ENCODE measurements at regions of chr10 and their contacts with region 1.

Region 1: GRCh38 chr10:62437696-62438095 is 63.5 kb downstream of the ZNF365 start:
- DNase-seq: peak; percentile 79
- H3K4me3 Mint-ChIP-seq: no peak overlapping the region
- H3K27ac Mint-ChIP-seq: no peak overlapping the region
- H3K4me1 Mint-ChIP-seq: peaks cover 10% of the 10 kb centered on the region
- H3K27me3 Mint-ChIP-seq: peaks cover 30% of the 10 kb centered on the region

Region 2: DNA sequence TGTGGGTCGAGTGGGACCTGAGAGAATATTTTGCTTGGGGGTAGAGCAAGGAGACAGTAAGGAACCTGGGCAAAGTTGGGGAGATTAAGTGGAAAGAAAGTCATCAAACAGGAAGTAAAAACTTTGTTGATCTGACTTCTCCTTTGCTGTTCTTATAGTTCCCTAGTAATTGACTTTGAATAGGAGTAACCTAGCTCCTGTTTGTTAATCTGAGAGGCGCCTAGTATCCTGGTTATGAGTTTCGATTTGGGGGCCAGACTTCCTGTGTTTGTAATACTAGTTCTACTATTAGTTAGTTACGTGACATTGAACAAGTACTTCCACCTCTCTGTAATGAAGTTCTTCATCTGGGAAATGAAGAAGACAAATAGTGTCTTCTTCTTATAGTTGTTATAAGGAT is 35.5 kb after region 1 on chr10:
- intact Hi-C with region 1: no loop called
- DNase-seq: no peak
- H3K4me3 Mint-ChIP-seq: no peak overlapping the region
- H3K27ac Mint-ChIP-seq: no peak overlapping the region
- H3K4me1 Mint-ChIP-seq: no peaks in the 10 kb centered on the region
- H3K27me3 Mint-ChIP-seq: peaks cover 6% of the 10 kb centered on the region

Region 3: DNA sequence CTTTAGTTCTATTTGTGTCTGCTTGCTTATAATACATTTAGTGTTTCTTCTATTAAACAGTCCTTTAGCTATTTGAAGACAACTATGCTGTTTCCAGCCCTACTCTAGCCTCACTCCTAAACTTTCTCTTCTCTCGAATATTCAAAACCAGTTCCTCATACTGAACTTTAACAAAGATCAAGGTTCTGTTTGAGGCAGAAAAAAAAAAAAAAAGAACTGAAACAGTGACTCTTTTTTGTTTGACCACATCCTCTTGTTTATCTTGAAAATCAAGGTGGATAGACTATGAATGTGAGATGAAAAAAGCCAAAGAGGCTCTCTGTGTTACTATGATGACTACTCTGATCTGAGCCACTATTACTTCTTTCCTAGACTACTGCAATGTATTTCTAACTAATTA is 90.7 kb after region 1 on chr10:
- intact Hi-C with region 1: loop called (anchors 5 kb)
- DNase-seq: peak; percentile 65
- H3K4me3 Mint-ChIP-seq: peak overlapping the region; percentile 27
- H3K27ac Mint-ChIP-seq: peak overlapping the region; percentile 39
- H3K4me1 Mint-ChIP-seq: peaks cover 33% of the 10 kb centered on the region
- H3K27me3 Mint-ChIP-seq: peaks cover 11% of the 10 kb centered on the region

Region 4: GRCh38 chr10:63083904-63084689 is 646.4 kb after region 1 on chr10:
- intact Hi-C with region 1: loop called (anchors 1 kb)
- DNase-seq: peak; percentile 79
- H3K4me3 Mint-ChIP-seq: no peak overlapping the region
- H3K27ac Mint-ChIP-seq: no peak overlapping the region
- H3K4me1 Mint-ChIP-seq: no peaks in the 10 kb centered on the region
- H3K27me3 Mint-ChIP-seq: peaks cover 33% of the 10 kb centered on the region

Region 5: DNA sequence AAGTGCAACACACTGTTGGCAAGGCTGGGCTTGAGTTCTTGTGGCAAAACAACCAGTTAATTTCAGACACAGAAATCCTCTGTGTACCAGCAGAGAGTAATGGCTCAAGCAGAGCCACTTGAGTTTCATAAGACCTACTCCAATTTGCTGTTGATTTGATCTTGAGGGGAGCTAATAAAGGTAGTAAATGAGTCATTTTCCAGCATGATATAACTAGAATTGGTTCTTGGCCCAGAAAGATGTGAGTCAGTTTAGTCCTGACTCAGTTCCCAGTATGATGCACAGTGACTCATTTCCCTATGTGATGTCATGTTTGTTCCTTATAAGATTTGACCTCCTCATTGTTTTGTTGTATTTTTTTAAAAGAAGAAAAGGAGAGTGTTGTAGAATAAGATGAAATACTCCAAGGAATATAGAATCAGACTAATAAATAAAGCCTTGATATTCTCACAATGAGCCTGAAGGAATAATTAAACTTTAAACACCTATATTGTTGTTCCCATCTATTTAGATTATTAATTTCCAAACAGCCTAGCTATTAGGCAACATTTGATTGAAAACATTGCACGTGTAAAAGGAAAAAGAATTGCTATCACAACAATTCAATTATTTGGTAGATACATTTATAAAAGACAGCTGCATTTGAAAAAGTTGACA is 1269.7 kb after region 1 on chr10:
- intact Hi-C with region 1: loop called (anchors 10 kb)
- DNase-seq: peak; percentile 63
- H3K4me3 Mint-ChIP-seq: peak overlapping the region; percentile 32
- H3K27ac Mint-ChIP-seq: peak overlapping the region; percentile 63
- H3K4me1 Mint-ChIP-seq: peaks cover 15% of the 10 kb centered on the region
- H3K27me3 Mint-ChIP-seq: no peaks in the 10 kb centered on the region

Measured in activated CD4-positive, alpha-beta T cell treated with anti-CD3 and anti-CD28 coated beads, Interleukin-2, amount 10 ng/mL, durations not matched to agents 24 days and 14 days (primary cell).